Activated T-helper 2 cell treated with anti-CD3 and anti-CD28 coated beads, Interferon-gamma antibody, Interleukin-2, Interleukin-4, amounts not matched to agents 10 μg/mL and 5 μg/mL and 100 μg/mL, durations not matched to agents 14 hours and 24 hours and 36 hours (primary cell): ENCODE measurements at regions of chr10 and their contacts with region 1.

Region 1: GRCh38 chr10:94545391-94546048 is at the start of gene HELLS:
- DNase-seq: peak; percentile 76
- H3K4me3 Mint-ChIP-seq: peak within 1 kb of the TSS; percentile 99
- H3K27ac Mint-ChIP-seq: peak within 1 kb of the TSS; percentile 98
- H3K4me1 Mint-ChIP-seq: peaks cover 35% of the 10 kb centered on the region
- H3K27me3 Mint-ChIP-seq: peaks cover 5% of the 10 kb centered on the region
- total RNA-seq, gene HELLS: 224 and 230 TPM in 2 replicates

Region 2: GRCh38 chr10:94402015-94402842 is 143.3 kb before region 1 on chr10 and contains the start of gene TBC1D12:
- intact Hi-C with region 1: loop called (anchors 5 kb)
- DNase-seq: peak; percentile 16
- H3K4me3 Mint-ChIP-seq: peak within 1 kb of the TSS; percentile 64
- H3K27ac Mint-ChIP-seq: no peak within 1 kb of the TSS
- H3K4me1 Mint-ChIP-seq: peaks cover 7% of the 10 kb centered on the region
- H3K27me3 Mint-ChIP-seq: peaks cover 60% of the 10 kb centered on the region
- total RNA-seq, gene TBC1D12: 0.85 and 1.4 TPM in 2 replicates

Region 3: DNA sequence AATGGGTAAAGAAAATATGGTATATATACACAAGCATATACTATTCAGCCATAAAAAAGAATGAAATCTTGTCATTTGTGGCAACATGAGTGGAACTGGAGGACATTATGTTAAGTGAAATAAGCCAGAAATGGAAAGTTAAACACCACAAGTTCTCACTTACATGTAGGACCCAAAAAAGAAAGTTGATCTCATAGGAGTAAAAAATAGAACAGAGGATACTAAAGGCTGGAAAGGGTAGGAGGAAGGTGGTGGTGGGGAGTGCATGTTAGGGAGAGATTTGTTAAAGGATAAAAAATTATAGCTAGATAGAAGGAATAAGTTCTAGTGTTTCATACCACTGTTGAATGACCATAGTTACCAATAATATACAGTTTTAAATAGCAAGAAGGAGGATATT is 94.7 kb before region 1 on chr10:
- intact Hi-C with region 1: no loop called
- DNase-seq: no peak
- H3K4me3 Mint-ChIP-seq: no peak overlapping the region
- H3K27ac Mint-ChIP-seq: no peak overlapping the region
- H3K4me1 Mint-ChIP-seq: no peaks in the 10 kb centered on the region
- H3K27me3 Mint-ChIP-seq: peaks cover 10% of the 10 kb centered on the region

Region 4: DNA sequence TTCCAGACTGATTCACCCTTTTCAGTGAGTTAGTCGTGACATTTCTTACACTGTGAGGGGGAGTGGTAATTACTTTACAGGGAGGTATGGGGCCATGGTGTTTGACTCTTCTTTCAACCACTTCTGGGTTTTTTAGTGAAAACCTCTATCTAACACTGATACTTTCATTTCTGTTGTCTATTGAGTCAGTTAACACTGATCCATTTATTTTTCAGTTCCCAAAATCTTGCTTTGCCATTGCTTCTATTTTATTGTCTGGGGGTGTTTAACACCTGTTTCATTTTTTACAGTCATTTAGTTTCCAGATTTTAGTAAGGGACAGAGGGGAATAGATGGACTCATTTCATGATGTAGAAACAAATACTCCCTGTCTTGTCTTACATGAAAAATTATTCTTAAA is 61.6 kb after region 1 on chr10:
- intact Hi-C with region 1: loop called (anchors 2 kb)
- DNase-seq: no peak
- H3K4me3 Mint-ChIP-seq: no peak overlapping the region
- H3K27ac Mint-ChIP-seq: peak overlapping the region; percentile 82
- H3K4me1 Mint-ChIP-seq: peaks cover 20% of the 10 kb centered on the region
- H3K27me3 Mint-ChIP-seq: no peaks in the 10 kb centered on the region